B cell (primary cell): ENCODE measurements at regions of chr7 and their contacts with region 1.

Region 1: GRCh38 chr7:3712841-3713240 is 411.8 kb downstream of the SDK1 start:
- DNase-seq: no peak
- ATAC-seq: no peak
- H3K4me3 ChIP-seq: no peak overlapping the region
- H3K4me3 Mint-ChIP-seq: no peak overlapping the region
- H3K27ac ChIP-seq: no peak overlapping the region
- H3K27ac Mint-ChIP-seq: no peak overlapping the region
- H3K4me1 ChIP-seq: no peaks in the 10 kb centered on the region
- H3K4me1 Mint-ChIP-seq: no peaks in the 10 kb centered on the region
- H3K27me3 ChIP-seq: peaks cover 0 to 2% (median 0%) of the 10 kb centered on the region in 4 experiments
- H3K27me3 Mint-ChIP-seq: peaks cover 12% of the 10 kb centered on the region
- CTCF ChIP-seq: no peak

Region 2: DNA sequence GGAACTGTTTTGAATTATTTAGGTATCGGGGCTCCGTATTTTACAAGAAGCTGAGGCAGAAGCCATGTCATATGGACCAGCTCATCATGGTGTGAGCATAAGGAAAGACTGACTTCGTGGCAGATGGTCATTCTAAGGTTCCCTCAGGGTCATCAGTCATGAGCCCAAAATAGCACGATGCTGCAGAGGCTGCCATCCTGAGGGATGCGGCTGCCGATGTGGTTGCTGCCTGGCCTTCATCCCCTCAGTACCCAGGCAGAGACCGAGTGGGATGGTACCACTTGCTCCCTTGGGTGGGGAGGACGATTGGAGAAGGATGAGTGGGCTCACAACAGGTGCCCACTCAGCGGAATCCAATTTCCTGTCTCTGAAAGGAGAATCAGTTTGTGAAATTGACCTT is 78.5 kb after region 1 on chr7:
- CTCF ChIA-PET with region 1: no interaction called
- POLR2A ChIA-PET with region 1: no interaction called
- intact Hi-C with region 1: no loop called
- DNase-seq: no peak
- ATAC-seq: no peak
- H3K4me3 ChIP-seq: no peak overlapping the region
- H3K4me3 Mint-ChIP-seq: no peak overlapping the region
- H3K27ac ChIP-seq: no peak overlapping the region
- H3K27ac Mint-ChIP-seq: no peak overlapping the region
- H3K4me1 ChIP-seq: no peaks in the 10 kb centered on the region
- H3K4me1 Mint-ChIP-seq: no peaks in the 10 kb centered on the region
- H3K27me3 ChIP-seq: peaks cover 0 to 9% (median 0%) of the 10 kb centered on the region in 4 experiments
- H3K27me3 Mint-ChIP-seq: peaks cover 32% of the 10 kb centered on the region
- CTCF ChIP-seq: no peak

Region 3: DNA sequence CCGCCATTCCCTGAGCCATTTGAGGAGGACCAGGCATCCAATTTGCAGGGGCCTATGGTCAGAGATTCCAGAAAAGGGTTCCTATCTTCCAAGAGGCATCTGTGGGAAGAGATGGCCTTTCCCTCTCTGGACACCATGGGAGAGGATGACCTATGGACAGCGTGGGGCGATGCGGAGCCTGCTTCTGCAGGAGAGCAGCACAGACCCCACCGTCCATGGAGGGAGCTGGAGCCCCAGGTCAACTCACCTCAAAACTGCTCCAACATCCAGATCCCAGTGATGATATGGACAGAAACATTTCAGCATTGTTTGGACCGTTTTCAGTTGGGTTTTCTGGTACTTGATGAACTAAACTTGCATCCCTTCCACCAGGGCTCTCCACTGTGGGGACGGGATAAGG is 935.3 kb after region 1 on chr7:
- CTCF ChIA-PET with region 1: no interaction called
- POLR2A ChIA-PET with region 1: interaction called, 12 read pairs
- intact Hi-C with region 1: no loop called
- DNase-seq: no peak
- ATAC-seq: no peak
- H3K4me3 ChIP-seq: no peak overlapping the region
- H3K4me3 Mint-ChIP-seq: no peak overlapping the region
- H3K27ac ChIP-seq: no peak overlapping the region
- H3K27ac Mint-ChIP-seq: no peak overlapping the region
- H3K4me1 ChIP-seq: no peaks in the 10 kb centered on the region
- H3K4me1 Mint-ChIP-seq: no peaks in the 10 kb centered on the region
- H3K27me3 ChIP-seq: no peaks in the 10 kb centered on the region
- H3K27me3 Mint-ChIP-seq: no peaks in the 10 kb centered on the region
- CTCF ChIP-seq: no peak